Activated naive CD8-positive, alpha-beta T cell treated with anti-CD3 and anti-CD28 coated beads, Interleukin-2, amount 10 ng/mL, durations not matched to agents 7 days and 5 days (primary cell): ENCODE measurements at regions of chr6 and their contacts with region 1.

Region 1: DNA sequence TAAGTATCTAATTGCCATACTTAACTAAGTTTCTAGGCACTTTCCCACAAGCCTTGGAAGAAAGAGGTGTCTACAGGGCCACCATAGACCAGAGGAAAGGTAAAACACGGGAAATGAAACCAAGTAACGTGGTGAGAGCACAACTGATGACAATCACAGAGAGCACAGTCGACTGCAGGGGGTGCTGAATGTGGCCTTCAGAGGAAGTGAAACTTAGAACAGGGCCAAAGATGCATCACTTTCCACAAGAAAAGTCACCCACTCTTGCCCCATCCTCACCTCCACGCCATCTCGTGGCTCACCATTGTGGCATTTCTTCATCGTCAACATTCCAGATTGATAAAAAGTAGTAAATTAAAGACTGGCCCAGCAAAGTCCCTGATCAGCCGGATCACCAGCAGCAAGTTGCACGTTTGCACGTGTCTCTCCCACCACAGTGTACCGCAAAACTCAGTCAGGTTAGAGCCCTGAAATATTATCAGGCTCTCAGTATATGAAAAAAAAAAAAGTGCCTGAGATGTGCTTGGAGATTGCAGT is 31.4 kb downstream of the HIVEP2 start:
- DNase-seq: peak; percentile 69
- ATAC-seq: peak; percentile 94
- H3K4me3 Mint-ChIP-seq: peak overlapping the region; percentile 76
- H3K27ac Mint-ChIP-seq: peak overlapping the region; percentile 93
- H3K4me1 Mint-ChIP-seq: peaks cover 63% of the 10 kb centered on the region
- H3K27me3 Mint-ChIP-seq: no peaks in the 10 kb centered on the region

Region 2: GRCh38 chr6:141667580-141668309 is 1245.8 kb before region 1 on chr6:
- POLR2A ChIA-PET with region 1: no interaction called
- DNase-seq: no peak
- ATAC-seq: no peak
- H3K4me3 Mint-ChIP-seq: no peak overlapping the region
- H3K27ac Mint-ChIP-seq: no peak overlapping the region
- H3K4me1 Mint-ChIP-seq: no peaks in the 10 kb centered on the region
- H3K27me3 Mint-ChIP-seq: no peaks in the 10 kb centered on the region

Region 3: DNA sequence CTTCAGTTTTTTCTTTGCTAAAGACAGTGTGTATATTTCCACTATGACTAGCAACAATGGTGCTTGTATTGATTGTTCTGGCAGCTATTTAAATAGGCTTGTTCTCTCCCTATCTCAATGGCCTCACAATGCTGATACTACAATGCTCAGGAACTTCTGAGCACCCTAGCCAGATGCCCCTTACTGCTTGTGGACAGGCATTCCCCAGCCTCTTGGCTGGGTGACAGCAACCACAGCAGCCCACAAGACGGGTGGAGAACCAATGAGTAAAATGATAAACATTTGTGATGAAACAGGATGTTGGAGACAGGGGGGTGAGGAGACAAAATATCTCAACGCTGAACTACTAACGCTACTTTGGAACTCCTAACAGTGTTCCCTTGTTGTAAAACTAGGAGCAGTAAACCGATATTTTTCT is 10.9 kb before region 1 on chr6:
- POLR2A ChIA-PET with region 1: interaction called, 12 read pairs
- DNase-seq: peak; percentile 79
- ATAC-seq: peak; percentile 73
- H3K4me3 Mint-ChIP-seq: peak overlapping the region; percentile 76
- H3K27ac Mint-ChIP-seq: peak overlapping the region; percentile 89
- H3K4me1 Mint-ChIP-seq: peaks cover 57% of the 10 kb centered on the region
- H3K27me3 Mint-ChIP-seq: no peaks in the 10 kb centered on the region